CD4-positive, alpha-beta memory T cell (primary cell): ENCODE measurements at regions of chr2 and their contacts with region 1.

Region 1: GRCh38 chr2:195498176-195498575 is 158.8 kb upstream of the SLC39A10 start:
- DNase-seq: peak; percentile 52 to 66 (median 60)
- H3K4me3 ChIP-seq: no peak overlapping the region
- H3K4me3 Mint-ChIP-seq: peak overlapping the region in 2 of 8 donors; percentile 10 to 22
- H3K27ac ChIP-seq: no peak overlapping the region
- H3K27ac Mint-ChIP-seq: peak overlapping the region in 3 of 7 donors; percentile 2 to 70 (median 19)
- H3K4me1 ChIP-seq: peaks cover 12% of the 10 kb centered on the region
- H3K4me1 Mint-ChIP-seq: peaks cover 18 to 41% (median 31%) of the 10 kb centered on the region in 4 donors
- H3K27me3 ChIP-seq: no peaks in the 10 kb centered on the region
- H3K27me3 Mint-ChIP-seq: no peaks in the 10 kb centered on the region

Region 2: GRCh38 chr2:195482010-195482409 is 16.2 kb before region 1 on chr2:
- CTCF ChIA-PET with region 1: interaction called, 17 read pairs
- POLR2A ChIA-PET with region 1: no interaction called
- intact Hi-C with region 1: no loop called
- DNase-seq: no peak
- H3K4me3 ChIP-seq: no peak overlapping the region
- H3K4me3 Mint-ChIP-seq: peak overlapping the region in 1 of 8 donors; percentile 29
- H3K27ac ChIP-seq: no peak overlapping the region
- H3K27ac Mint-ChIP-seq: peak overlapping the region in 1 of 7 donors; percentile 3
- H3K4me1 ChIP-seq: peaks cover 26% of the 10 kb centered on the region
- H3K4me1 Mint-ChIP-seq: peaks cover 16 to 30% (median 22%) of the 10 kb centered on the region in 4 donors
- H3K27me3 ChIP-seq: no peaks in the 10 kb centered on the region
- H3K27me3 Mint-ChIP-seq: peaks cover 0 to 2% of the 10 kb centered on the region in 2 donors

Region 3: GRCh38 chr2:195533771-195534642 is 35.8 kb after region 1 on chr2:
- CTCF ChIA-PET with region 1: interaction called, 78 read pairs
- POLR2A ChIA-PET with region 1: interaction called, 20 read pairs
- intact Hi-C with region 1: loop called (anchors 1 kb)
- DNase-seq: peak in 4 of 5 donors; percentile 42 to 77 (median 49)
- H3K4me3 ChIP-seq: peak overlapping the region; percentile 59 to 70
- H3K4me3 Mint-ChIP-seq: peak overlapping the region; percentile 81 to 92 (median 86)
- H3K27ac ChIP-seq: peak overlapping the region; percentile 55
- H3K27ac Mint-ChIP-seq: peak overlapping the region; percentile 93 to 98 (median 96)
- H3K4me1 ChIP-seq: peaks cover 83% of the 10 kb centered on the region
- H3K4me1 Mint-ChIP-seq: peaks cover 69 to 91% (median 78%) of the 10 kb centered on the region in 4 donors
- H3K27me3 ChIP-seq: no peaks in the 10 kb centered on the region
- H3K27me3 Mint-ChIP-seq: no peaks in the 10 kb centered on the region

Region 4: GRCh38 chr2:195559431-195559914 is 61.3 kb after region 1 on chr2:
- CTCF ChIA-PET with region 1: interaction called, 48 read pairs
- POLR2A ChIA-PET with region 1: interaction called, 27 read pairs
- intact Hi-C with region 1: loop called (anchors 1 kb)
- DNase-seq: peak; percentile 87 to 90 (median 89)
- H3K4me3 ChIP-seq: no peak overlapping the region
- H3K4me3 Mint-ChIP-seq: peak overlapping the region; percentile 49 to 85 (median 70)
- H3K27ac ChIP-seq: peak overlapping the region; percentile 31
- H3K27ac Mint-ChIP-seq: peak overlapping the region; percentile 82 to 97 (median 92)
- H3K4me1 ChIP-seq: peaks cover 86% of the 10 kb centered on the region
- H3K4me1 Mint-ChIP-seq: peaks cover 49 to 74% (median 58%) of the 10 kb centered on the region in 4 donors
- H3K27me3 ChIP-seq: no peaks in the 10 kb centered on the region
- H3K27me3 Mint-ChIP-seq: no peaks in the 10 kb centered on the region

Region 5: GRCh38 chr2:195590861-195591205 is 92.7 kb after region 1 on chr2:
- CTCF ChIA-PET with region 1: interaction called, 11 read pairs
- POLR2A ChIA-PET with region 1: no interaction called
- intact Hi-C with region 1: no loop called
- DNase-seq: no peak
- H3K4me3 ChIP-seq: no peak overlapping the region
- H3K4me3 Mint-ChIP-seq: no peak overlapping the region
- H3K27ac ChIP-seq: no peak overlapping the region
- H3K27ac Mint-ChIP-seq: peak overlapping the region in 1 of 7 donors; percentile 54
- H3K4me1 ChIP-seq: peaks cover 8% of the 10 kb centered on the region
- H3K4me1 Mint-ChIP-seq: peaks cover 13 to 18% (median 17%) of the 10 kb centered on the region in 4 donors
- H3K27me3 ChIP-seq: no peaks in the 10 kb centered on the region
- H3K27me3 Mint-ChIP-seq: no peaks in the 10 kb centered on the region

Region 6: GRCh38 chr2:195664528-195664927 is 166.4 kb after region 1 on chr2:
- CTCF ChIA-PET with region 1: interaction called, 245 read pairs
- POLR2A ChIA-PET with region 1: interaction called, 150 read pairs
- intact Hi-C with region 1: loop called (anchors 1 kb)
- DNase-seq: no peak
- H3K4me3 ChIP-seq: no peak overlapping the region
- H3K4me3 Mint-ChIP-seq: peak overlapping the region in 2 of 8 donors; percentile 22 to 23
- H3K27ac ChIP-seq: no peak overlapping the region
- H3K27ac Mint-ChIP-seq: peak overlapping the region in 5 of 7 donors; percentile 18 to 82 (median 53)
- H3K4me1 ChIP-seq: peaks cover 74% of the 10 kb centered on the region
- H3K4me1 Mint-ChIP-seq: peaks cover 35 to 65% (median 43%) of the 10 kb centered on the region in 4 donors
- H3K27me3 ChIP-seq: no peaks in the 10 kb centered on the region
- H3K27me3 Mint-ChIP-seq: no peaks in the 10 kb centered on the region

Region 7: GRCh38 chr2:195820373-195820772 is 322.2 kb after region 1 on chr2:
- CTCF ChIA-PET with region 1: no interaction called
- POLR2A ChIA-PET with region 1: no interaction called
- intact Hi-C with region 1: no loop called
- DNase-seq: no peak
- H3K4me3 ChIP-seq: no peak overlapping the region
- H3K4me3 Mint-ChIP-seq: no peak overlapping the region
- H3K27ac ChIP-seq: no peak overlapping the region
- H3K27ac Mint-ChIP-seq: no peak overlapping the region
- H3K4me1 ChIP-seq: no peaks in the 10 kb centered on the region
- H3K4me1 Mint-ChIP-seq: no peaks in the 10 kb centered on the region
- H3K27me3 ChIP-seq: peaks cover under 1% of the 10 kb centered on the region
- H3K27me3 Mint-ChIP-seq: peaks cover 0 to 2% of the 10 kb centered on the region in 2 donors

Region 8: DNA sequence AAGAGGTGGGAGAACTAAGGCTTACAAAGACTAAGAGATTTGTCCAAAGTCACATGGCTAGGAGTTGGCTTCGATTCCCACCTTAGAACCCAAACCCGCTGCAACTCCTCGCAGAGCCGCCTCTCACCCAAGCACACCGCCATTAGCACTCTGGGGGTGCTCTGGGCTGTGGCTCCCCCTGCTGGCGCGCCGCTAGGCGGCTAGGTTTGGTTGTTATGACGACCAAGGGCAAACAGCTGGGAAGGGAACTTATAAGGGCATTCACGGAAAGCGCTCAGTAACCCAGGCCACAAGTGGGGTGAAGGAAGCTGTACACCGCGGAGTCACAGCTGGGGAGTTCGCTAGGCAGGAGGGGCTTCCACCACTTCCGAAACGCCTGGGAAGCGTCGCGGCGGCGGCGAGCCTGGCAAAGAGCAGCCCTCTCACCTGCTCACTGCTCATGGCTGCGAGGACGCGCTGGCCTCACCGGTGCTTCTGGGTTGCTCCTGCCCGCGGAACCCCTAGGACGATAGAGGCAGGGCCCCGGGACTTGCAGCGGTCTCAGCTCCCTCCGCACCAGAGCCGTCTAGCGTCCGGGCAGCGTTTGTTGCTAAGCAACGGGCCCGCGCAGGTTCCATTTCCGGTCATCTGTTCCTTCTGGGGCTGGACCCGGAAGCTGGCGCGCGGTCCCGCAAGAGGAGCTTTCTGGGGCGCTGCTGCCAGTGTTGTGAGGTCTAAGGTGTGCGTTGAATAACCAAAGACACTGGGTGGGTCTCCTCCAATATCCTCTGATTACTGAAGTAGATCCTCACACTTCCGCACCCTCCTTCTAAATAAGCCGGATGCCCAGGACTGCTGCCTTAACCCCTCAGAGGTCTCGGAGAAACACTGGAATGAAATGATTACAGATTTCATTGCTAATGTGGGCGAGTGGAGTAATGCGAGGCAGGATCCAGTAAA is 570.4 kb after region 1 on chr2 and contains the start of gene DNAH7:
- CTCF ChIA-PET with region 1: interaction called, 22 read pairs
- POLR2A ChIA-PET with region 1: no interaction called
- intact Hi-C with region 1: loop called (anchors 1 kb)
- DNase-seq: peak; percentile 92 to 96 (median 92)
- H3K4me3 ChIP-seq: peak within 1 kb of the TSS; percentile 54 to 68
- H3K4me3 Mint-ChIP-seq: peak within 1 kb of the TSS; percentile 84 to 91 (median 86)
- H3K27ac ChIP-seq: peak within 1 kb of the TSS; percentile 27
- H3K27ac Mint-ChIP-seq: peak within 1 kb of the TSS; percentile 81 to 95 (median 86)
- H3K4me1 ChIP-seq: peaks cover 18% of the 10 kb centered on the region
- H3K4me1 Mint-ChIP-seq: peaks cover 5 to 15% (median 8%) of the 10 kb centered on the region in 4 donors
- H3K27me3 ChIP-seq: no peaks in the 10 kb centered on the region
- H3K27me3 Mint-ChIP-seq: peaks cover 1 to 7% of the 10 kb centered on the region in 2 donors
- total RNA-seq, gene DNAH7: not detected